ENCODE measurements at regions of chr10 and their contacts with region 1.

Region 1: DNA sequence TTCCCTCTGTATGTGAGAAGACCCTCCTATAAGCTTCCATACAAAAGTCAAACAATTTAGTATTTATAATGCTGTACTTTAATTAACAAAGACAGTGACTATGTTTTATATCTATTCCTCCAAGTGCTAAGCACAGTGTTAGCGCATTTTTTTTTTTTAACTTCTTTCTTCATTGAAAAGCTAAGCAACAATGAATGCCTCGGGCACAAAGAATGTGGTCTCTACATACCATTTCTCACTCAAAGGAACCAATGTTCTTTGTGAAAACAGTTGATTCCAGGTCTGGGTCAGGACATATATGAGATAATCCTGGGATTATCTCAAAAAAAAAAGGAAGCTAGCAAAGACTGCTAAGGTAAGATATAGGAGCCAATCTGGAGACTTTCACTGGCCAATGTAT is 26.2 kb upstream of the REEP3 start:
- DNase-seq: no peak
- H3K4me3 ChIP-seq: no peak overlapping the region
- H3K27ac ChIP-seq: no peak overlapping the region
- H3K4me1 ChIP-seq: peaks cover 29% of the 10 kb centered on the region
- H3K27me3 ChIP-seq: no peaks in the 10 kb centered on the region
- CTCF ChIP-seq: no peak

Region 2: DNA sequence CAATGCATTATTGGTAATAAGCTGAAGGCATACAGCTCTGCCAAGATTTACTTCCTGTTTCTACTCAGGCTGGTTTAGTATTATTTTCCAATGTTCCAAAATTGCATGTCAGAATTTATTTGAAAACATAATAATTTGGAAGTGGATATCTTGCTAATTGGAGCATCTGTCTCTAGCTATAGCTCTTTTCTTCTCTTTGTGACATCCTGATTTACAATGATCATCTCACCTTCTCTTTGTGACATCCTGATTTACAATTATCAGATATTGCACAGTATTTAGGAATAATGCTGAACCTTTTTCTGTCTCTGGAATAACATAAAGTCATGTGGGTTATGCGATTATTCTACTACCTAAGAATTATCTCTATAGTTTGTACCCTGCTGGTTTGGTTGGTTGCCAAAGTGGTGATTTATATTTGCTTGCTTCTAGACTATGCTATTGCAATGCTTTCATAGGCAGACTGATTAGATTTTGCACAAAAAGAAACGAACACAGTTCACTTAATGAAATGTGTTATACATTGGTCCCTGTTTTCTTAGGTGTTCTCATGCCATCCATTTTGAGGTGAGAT is 1876.5 kb before region 1 on chr10:
- CTCF ChIA-PET with region 1: no interaction called
- POLR2A ChIA-PET with region 1: no interaction called
- intact Hi-C with region 1: loop called (anchors 5 kb)
- DNase-seq: no peak
- H3K4me3 ChIP-seq: no peak overlapping the region
- H3K27ac ChIP-seq: no peak overlapping the region
- H3K4me1 ChIP-seq: peaks cover 14% of the 10 kb centered on the region
- H3K27me3 ChIP-seq: no peaks in the 10 kb centered on the region
- CTCF ChIP-seq: no peak

Measured in A673 (cell line).